Stomach (tissue), 19 donors: ENCODE measurements at regions of chr4 and their contacts with region 1.

Region 1: GRCh38 chr4:86908251-86908657 is 16.0 kb upstream of the C4orf36 start:
- DNase-seq: peak in 1 of 2 donors; percentile 45
- H3K4me3 ChIP-seq: no peak overlapping the region
- H3K27ac ChIP-seq: peak overlapping the region in 4 of 5 donors; percentile 20 to 70 (median 44)
- H3K4me1 ChIP-seq: peaks cover 4 to 48% (median 36%) of the 10 kb centered on the region in 4 donors
- H3K27me3 ChIP-seq: no peaks in the 10 kb centered on the region
- CTCF ChIP-seq: no peak
- EP300 ChIP-seq: no peak
- POLR2A ChIP-seq: no peak

Region 2: DNA sequence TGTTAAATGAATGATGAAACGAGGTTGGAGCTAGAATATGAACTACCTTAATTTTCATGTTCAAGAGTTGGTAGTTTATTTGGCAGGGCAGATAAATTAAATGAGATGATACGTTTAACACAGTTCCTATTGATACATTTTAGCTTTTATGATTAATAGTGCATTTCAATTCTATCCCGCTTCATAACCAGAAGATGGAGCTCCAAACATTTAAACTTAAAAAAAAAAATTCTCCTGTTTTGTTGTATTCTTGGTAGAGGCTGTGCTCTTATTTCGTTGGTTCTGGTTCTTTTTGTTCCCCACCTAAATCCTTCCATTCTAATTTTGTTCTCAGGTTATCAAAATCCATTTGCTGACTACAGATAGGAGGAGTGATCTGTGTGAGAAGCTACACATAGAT is 385.9 kb before region 1 on chr4:
- intact Hi-C with region 1: loop called (anchors 10 kb)
- DNase-seq: no peak
- H3K4me3 ChIP-seq: no peak overlapping the region
- H3K27ac ChIP-seq: no peak overlapping the region
- H3K4me1 ChIP-seq: no peaks in the 10 kb centered on the region
- H3K27me3 ChIP-seq: no peaks in the 10 kb centered on the region
- CTCF ChIP-seq: peak in 2 of 7 experiments; percentile 3 to 21
- EP300 ChIP-seq: no peak
- POLR2A ChIP-seq: no peak

Region 3: DNA sequence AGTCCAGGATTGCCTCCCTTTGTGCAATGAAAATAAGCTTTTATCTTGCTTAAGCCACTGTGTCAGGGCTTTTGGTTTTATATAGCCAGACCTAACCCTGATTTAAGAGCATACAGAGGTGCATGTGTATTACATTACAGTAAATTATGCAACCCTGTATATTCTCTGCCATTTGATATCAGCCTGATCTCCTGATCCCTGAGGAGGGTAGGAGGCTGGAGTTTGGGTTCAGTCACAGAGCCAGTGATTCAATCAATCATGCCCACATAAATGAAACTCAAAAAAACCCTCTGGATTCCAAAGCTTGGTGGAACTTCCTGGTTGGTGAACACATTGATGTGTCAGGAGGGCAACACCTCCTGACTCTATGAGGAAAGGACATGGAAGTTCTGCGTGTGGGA is 319.5 kb after region 1 on chr4:
- intact Hi-C with region 1: no loop called
- DNase-seq: no peak
- H3K4me3 ChIP-seq: no peak overlapping the region
- H3K27ac ChIP-seq: no peak overlapping the region
- H3K4me1 ChIP-seq: peaks cover 0 to 3% (median 0%) of the 10 kb centered on the region in 4 donors
- H3K27me3 ChIP-seq: no peaks in the 10 kb centered on the region
- CTCF ChIP-seq: no peak
- EP300 ChIP-seq: no peak
- POLR2A ChIP-seq: no peak